Heart right ventricle (tissue), 16 donors: ENCODE measurements at regions of chr2 and their contacts with region 1.

Region 1: DNA sequence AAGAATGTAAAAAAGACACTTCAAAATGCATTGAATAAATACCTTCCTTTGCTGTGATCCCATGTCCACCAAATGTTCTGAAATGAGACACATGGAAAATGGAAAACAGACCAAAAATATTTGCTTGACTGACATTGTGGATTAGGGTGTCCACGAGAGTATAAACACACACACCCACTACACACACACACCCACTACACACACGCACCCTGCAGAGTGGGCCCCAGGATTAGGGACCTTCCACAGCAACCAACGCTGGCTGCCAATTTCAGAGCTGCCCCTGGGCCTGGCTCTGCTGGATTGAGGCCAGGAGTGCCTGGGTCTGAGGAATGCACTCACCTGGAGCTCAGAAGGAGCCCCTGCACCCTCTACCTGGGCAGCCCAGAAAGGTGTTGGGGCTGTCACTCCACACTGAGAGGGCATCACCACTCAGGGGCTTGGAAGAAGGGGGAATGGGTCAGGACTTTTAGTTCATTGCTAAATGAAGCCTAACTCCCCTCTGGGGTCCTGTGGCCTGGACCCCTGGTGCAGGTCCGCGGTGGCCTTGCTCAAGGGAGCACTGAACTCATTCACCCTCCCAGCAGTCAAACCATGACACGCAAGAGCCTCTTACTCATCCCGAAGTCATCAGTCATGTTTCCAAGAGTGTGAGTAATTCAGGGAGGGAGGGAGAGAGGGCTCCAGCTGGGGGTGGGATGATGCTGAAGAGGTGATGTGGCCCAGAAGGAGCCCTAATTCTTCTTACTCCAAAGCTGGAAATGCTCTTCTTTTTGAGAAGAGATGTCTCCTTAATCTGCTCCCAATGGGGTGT is 50.2 kb upstream of the PLB1 start:
- DNase-seq: no peak
- ATAC-seq: peak in 3 of 8 donors; percentile 14 to 71 (median 20)
- H3K4me3 ChIP-seq: no peak overlapping the region
- H3K27ac ChIP-seq: peak overlapping the region in 1 of 10 donors; percentile 46
- H3K4me1 ChIP-seq: peaks cover 0 to 52% (median 0%) of the 10 kb centered on the region in 9 donors
- H3K27me3 ChIP-seq: no peaks in the 10 kb centered on the region
- CTCF ChIP-seq: no peak

Region 2: GRCh38 chr2:27683390-27684071 is 762.1 kb before region 1 on chr2:
- intact Hi-C with region 1: loop called in 2 of 10 experiments (anchors 2 to 5 kb)
- DNase-seq: peak; percentile 20 to 89
- ATAC-seq: peak; percentile 61 to 88 (median 80)
- H3K4me3 ChIP-seq: no peak overlapping the region
- H3K27ac ChIP-seq: peak overlapping the region in 1 of 10 donors; percentile 55
- H3K4me1 ChIP-seq: peaks cover 0 to 22% (median 0%) of the 10 kb centered on the region in 9 donors
- H3K27me3 ChIP-seq: no peaks in the 10 kb centered on the region
- CTCF ChIP-seq: peak; percentile 85 to 99 (median 97)

Region 3: DNA sequence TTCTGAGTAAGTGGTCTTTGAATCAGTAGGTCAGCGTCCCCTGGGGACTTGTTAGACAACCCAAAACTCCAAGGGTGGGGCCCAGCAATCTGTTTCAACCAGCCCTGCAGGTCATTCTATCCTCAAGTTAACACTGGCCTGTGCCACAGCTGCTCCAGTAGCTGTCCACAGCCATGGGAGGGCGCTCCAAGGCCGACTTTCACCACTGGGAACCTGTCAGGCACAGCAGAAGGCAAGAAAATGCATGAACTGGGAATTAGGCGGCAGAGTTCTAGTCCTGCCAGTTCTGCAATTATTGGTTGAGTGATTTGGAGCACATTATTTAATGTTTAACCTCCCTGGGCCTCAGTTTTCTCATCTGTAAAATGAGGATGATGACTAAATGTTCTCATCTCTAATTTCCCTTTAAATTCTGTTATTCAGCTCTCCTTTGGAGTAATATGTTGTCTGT is 691.5 kb before region 1 on chr2:
- intact Hi-C with region 1: loop called in 6 of 10 experiments (anchors 2 to 10 kb)
- DNase-seq: peak; percentile 78 to 82
- ATAC-seq: peak; percentile 66 to 92 (median 83)
- H3K4me3 ChIP-seq: no peak overlapping the region
- H3K27ac ChIP-seq: no peak overlapping the region
- H3K4me1 ChIP-seq: peaks cover 0 to 22% (median 11%) of the 10 kb centered on the region in 9 donors
- H3K27me3 ChIP-seq: no peaks in the 10 kb centered on the region
- CTCF ChIP-seq: peak; percentile 64 to 93 (median 83)